ENCODE measurements at regions of chr15 and their contacts with region 1.

Region 1: GRCh38 chr15:70091726-70092463 is 5.8 kb downstream of the TLE3 start:
- DNase-seq: peak; percentile 39
- ATAC-seq: peak; percentile 16
- H3K4me3 Mint-ChIP-seq: peak overlapping the region; percentile 37
- H3K27ac Mint-ChIP-seq: no peak overlapping the region
- H3K4me1 Mint-ChIP-seq: peaks cover 74% of the 10 kb centered on the region
- H3K27me3 Mint-ChIP-seq: no peaks in the 10 kb centered on the region

Region 2: DNA sequence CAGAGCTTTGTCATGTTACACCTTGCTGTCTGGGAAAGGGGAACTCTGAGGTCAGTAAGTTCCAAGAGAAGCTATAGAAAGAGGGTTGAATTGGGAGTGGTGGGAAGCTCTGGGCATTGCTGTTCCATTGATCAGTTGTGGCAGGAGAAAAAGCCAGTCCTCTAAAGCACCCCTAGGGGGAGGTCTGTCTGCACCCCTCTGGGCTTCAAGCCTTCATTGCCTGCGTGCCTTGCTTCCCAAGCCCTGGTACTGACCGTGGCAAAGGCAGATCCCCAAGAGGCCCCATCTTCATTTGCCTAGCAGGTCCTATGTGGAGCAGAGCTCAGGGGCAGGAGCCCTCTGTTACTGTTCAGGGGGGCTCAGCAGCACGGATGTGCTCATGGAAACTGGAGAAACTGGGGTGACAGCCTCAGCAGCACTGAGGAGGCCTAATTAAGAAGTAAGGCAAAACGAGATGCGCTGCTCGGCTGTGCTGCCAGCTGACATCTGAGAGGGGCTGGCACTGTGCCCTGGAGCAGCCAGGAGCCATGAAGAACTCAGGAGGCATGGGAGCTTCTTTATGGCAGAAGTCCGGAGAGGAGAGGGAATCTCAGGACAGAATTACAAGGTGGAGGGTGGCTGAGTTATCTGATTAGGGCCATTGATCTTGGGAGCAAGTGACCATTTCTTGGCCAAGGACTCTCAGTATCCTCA is 368.3 kb before region 1 on chr15:
- CTCF ChIA-PET with region 1: no interaction called
- POLR2A ChIA-PET with region 1: no interaction called
- intact Hi-C with region 1: no loop called
- DNase-seq: no peak
- ATAC-seq: no peak
- H3K4me3 Mint-ChIP-seq: no peak overlapping the region
- H3K27ac Mint-ChIP-seq: no peak overlapping the region
- H3K4me1 Mint-ChIP-seq: peaks cover 67% of the 10 kb centered on the region
- H3K27me3 Mint-ChIP-seq: peaks cover 4% of the 10 kb centered on the region

Region 3: GRCh38 chr15:70023064-70023768 is 68.7 kb before region 1 on chr15:
- CTCF ChIA-PET with region 1: no interaction called
- POLR2A ChIA-PET with region 1: no interaction called
- intact Hi-C with region 1: loop called in 1 of 2 experiments (anchors 5 kb)
- DNase-seq: peak; percentile 62
- ATAC-seq: peak; percentile 100
- H3K4me3 Mint-ChIP-seq: no peak overlapping the region
- H3K27ac Mint-ChIP-seq: no peak overlapping the region
- H3K4me1 Mint-ChIP-seq: peaks cover 15% of the 10 kb centered on the region
- H3K27me3 Mint-ChIP-seq: no peaks in the 10 kb centered on the region